ENCODE measurements at regions of chr17 and their contacts with region 1.

Region 1: DNA sequence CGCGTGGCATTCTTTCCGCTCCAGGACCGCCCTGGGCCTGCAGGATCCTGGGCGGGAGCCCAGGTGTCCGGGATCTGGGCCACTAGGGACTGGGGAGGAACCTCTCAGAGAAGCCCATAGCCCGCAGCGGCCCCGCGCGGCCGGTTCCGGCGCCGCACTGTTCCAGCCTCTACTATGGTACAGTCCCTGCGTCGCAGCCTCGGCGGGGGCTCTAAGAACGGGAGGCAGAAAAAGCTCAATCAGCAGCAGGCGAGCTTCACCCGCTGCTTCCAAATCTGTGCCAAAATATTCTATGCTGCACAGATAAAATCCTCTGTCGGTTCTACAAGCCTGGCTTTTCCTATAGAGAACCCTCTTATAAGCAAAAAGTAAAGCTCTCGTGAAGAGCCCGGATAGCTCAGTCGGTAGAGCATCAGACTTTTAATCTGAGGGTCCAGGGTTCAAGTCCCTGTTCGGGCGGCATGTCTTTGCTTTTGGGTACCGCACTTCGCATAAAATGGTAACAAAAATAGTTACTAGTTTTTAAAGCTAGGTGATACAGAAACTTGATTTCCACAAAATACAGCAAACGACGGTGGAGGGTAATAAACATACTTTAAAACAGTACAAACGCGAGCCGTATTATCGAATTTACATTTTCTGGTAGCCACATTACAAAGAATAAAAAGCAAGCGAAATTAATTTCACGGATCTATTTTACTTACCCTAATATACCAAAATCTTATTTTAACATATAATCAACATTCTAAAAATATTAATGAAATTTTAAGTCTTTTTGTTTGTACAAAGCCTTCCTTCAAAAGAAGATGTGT is 661 bp upstream of the ALOXE3 start:
- DNase-seq: peak; percentile 77 to 91 (median 84)
- H3K4me3 ChIP-seq: peak overlapping the region; percentile 99
- H3K4me3 Mint-ChIP-seq: peak overlapping the region; percentile 84 to 98 (median 94)
- H3K27ac ChIP-seq: peak overlapping the region; percentile 41
- H3K27ac Mint-ChIP-seq: peak overlapping the region; percentile 77 to 100 (median 94)
- H3K4me1 ChIP-seq: peaks cover 50% of the 10 kb centered on the region
- H3K4me1 Mint-ChIP-seq: peaks cover 46 to 61% (median 60%) of the 10 kb centered on the region in 3 donors
- H3K27me3 ChIP-seq: peaks cover 27% of the 10 kb centered on the region
- H3K27me3 Mint-ChIP-seq: peaks cover 46 to 55% of the 10 kb centered on the region in 2 donors

Region 2: DNA sequence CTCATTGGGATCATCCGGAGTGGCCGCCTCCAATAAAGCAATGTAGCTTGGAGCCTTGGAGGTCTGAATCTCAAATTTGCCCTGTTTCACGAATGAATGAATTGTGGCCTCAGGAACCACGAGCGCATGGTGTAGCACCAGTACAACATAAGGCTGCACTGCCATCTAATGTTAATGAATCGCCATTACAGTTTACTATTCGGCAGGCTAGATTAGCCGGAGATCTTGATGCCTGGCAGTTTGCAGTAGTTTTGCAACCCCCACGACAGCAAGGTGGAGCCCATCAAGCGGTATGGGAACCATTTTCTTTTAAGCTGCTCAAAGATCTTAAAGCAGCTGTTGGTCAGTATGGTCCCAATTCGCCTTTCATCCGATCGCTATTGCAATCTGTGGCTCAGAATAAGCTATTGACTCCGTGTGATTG is 61.3 kb before region 1 on chr17:
- CTCF ChIA-PET with region 1: interaction called, 14 read pairs
- POLR2A ChIA-PET with region 1: no interaction called
- DNase-seq: peak; percentile 11 to 66 (median 63)
- H3K4me3 ChIP-seq: no peak overlapping the region
- H3K4me3 Mint-ChIP-seq: no peak overlapping the region
- H3K27ac ChIP-seq: no peak overlapping the region
- H3K27ac Mint-ChIP-seq: no peak overlapping the region
- H3K4me1 ChIP-seq: peaks cover 9% of the 10 kb centered on the region
- H3K4me1 Mint-ChIP-seq: peaks cover 12 to 22% (median 22%) of the 10 kb centered on the region in 3 donors
- H3K27me3 ChIP-seq: peaks cover 14% of the 10 kb centered on the region
- H3K27me3 Mint-ChIP-seq: peaks cover 21 to 50% of the 10 kb centered on the region in 2 donors

Region 3: GRCh38 chr17:8091033-8091687 is 27.8 kb before region 1 on chr17:
- CTCF ChIA-PET with region 1: interaction called, 76 read pairs
- POLR2A ChIA-PET with region 1: interaction called, 4 read pairs
- DNase-seq: no peak
- H3K4me3 ChIP-seq: no peak overlapping the region
- H3K4me3 Mint-ChIP-seq: no peak overlapping the region
- H3K27ac ChIP-seq: no peak overlapping the region
- H3K27ac Mint-ChIP-seq: no peak overlapping the region
- H3K4me1 ChIP-seq: peaks cover 4% of the 10 kb centered on the region
- H3K4me1 Mint-ChIP-seq: peaks cover 6 to 7% (median 7%) of the 10 kb centered on the region in 3 donors
- H3K27me3 ChIP-seq: peaks cover 5% of the 10 kb centered on the region
- H3K27me3 Mint-ChIP-seq: peaks cover 25 to 42% of the 10 kb centered on the region in 2 donors

Region 4: GRCh38 chr17:8138672-8139371 is 19.8 kb after region 1 on chr17:
- CTCF ChIA-PET with region 1: interaction called, 52 read pairs
- POLR2A ChIA-PET with region 1: interaction called, 14 read pairs
- DNase-seq: peak; percentile 92 to 97 (median 95)
- H3K4me3 ChIP-seq: peak overlapping the region; percentile 97
- H3K4me3 Mint-ChIP-seq: no peak overlapping the region
- H3K27ac ChIP-seq: peak overlapping the region; percentile 94
- H3K27ac Mint-ChIP-seq: no peak overlapping the region
- H3K4me1 ChIP-seq: peaks cover 22% of the 10 kb centered on the region
- H3K4me1 Mint-ChIP-seq: peaks cover 0 to 2% (median 0%) of the 10 kb centered on the region in 3 donors
- H3K27me3 ChIP-seq: no peaks in the 10 kb centered on the region
- H3K27me3 Mint-ChIP-seq: peaks cover 0 to 5% of the 10 kb centered on the region in 2 donors

Region 5: GRCh38 chr17:8173056-8173870 is 54.3 kb after region 1 on chr17:
- CTCF ChIA-PET with region 1: interaction called, 4 read pairs
- POLR2A ChIA-PET with region 1: interaction called, 18 read pairs
- DNase-seq: peak; percentile 60 to 92 (median 89)
- H3K4me3 ChIP-seq: peak overlapping the region; percentile 57
- H3K4me3 Mint-ChIP-seq: peak overlapping the region; percentile 86 to 95 (median 90)
- H3K27ac ChIP-seq: peak overlapping the region; percentile 98
- H3K27ac Mint-ChIP-seq: peak overlapping the region; percentile 99 to 100 (median 100)
- H3K4me1 ChIP-seq: peaks cover 44% of the 10 kb centered on the region
- H3K4me1 Mint-ChIP-seq: peaks cover 37 to 55% (median 51%) of the 10 kb centered on the region in 3 donors
- H3K27me3 ChIP-seq: no peaks in the 10 kb centered on the region
- H3K27me3 Mint-ChIP-seq: peaks cover 0 to 5% of the 10 kb centered on the region in 2 donors

Region 6: DNA sequence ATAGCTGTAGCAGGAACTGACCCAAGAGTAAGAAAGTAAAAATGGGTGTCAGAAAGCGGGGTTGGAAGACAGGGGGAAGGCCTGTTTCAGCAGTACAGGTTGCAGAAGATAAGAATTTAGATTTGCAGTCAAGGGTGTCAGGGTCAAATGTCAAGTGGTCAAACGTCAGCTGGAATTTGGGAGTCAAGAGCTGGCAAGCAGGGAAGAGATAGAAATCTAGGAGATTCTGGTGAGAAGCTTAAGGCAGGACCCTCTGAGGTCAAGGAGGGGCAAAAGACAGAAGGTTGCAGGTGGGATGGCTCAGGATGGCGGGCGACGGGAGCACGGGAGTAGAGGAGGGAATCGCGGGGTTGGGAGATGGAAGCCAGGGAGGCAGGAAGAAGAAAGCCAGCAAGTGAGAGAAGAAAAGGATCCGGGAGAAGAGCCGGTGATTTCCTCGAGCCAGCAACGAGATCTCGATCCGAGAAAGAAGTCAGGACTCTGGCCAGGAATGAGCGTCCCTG is 175.9 kb after region 1 on chr17:
- CTCF ChIA-PET with region 1: interaction called, 20 read pairs
- POLR2A ChIA-PET with region 1: interaction called, 4 read pairs
- DNase-seq: no peak
- H3K4me3 ChIP-seq: peak overlapping the region; percentile 87
- H3K4me3 Mint-ChIP-seq: peak overlapping the region; percentile 89 to 96 (median 92)
- H3K27ac ChIP-seq: peak overlapping the region; percentile 81
- H3K27ac Mint-ChIP-seq: peak overlapping the region; percentile 86 to 99 (median 95)
- H3K4me1 ChIP-seq: peaks cover 17% of the 10 kb centered on the region
- H3K4me1 Mint-ChIP-seq: peaks cover 31 to 44% (median 31%) of the 10 kb centered on the region in 3 donors
- H3K27me3 ChIP-seq: no peaks in the 10 kb centered on the region
- H3K27me3 Mint-ChIP-seq: peaks cover 0 to 5% of the 10 kb centered on the region in 2 donors

Measured in CD8-positive, alpha-beta memory T cell (primary cell).